Activated T-helper 2 cell treated with anti-CD3 and anti-CD28 coated beads, Interferon-gamma antibody, Interleukin-2, Interleukin-4, amounts not matched to agents 10 μg/mL and 5 μg/mL and 100 μg/mL, durations not matched to agents 14 hours and 24 hours and 36 hours (primary cell): ENCODE measurements at regions of chr7 and their contacts with region 1.

Region 1: GRCh38 chr7:80095545-80095944 is 39.1 kb upstream of the GNAI1 start:
- DNase-seq: no peak
- H3K4me3 Mint-ChIP-seq: no peak overlapping the region
- H3K27ac Mint-ChIP-seq: no peak overlapping the region
- H3K4me1 Mint-ChIP-seq: no peaks in the 10 kb centered on the region
- H3K27me3 Mint-ChIP-seq: peaks cover 11% of the 10 kb centered on the region

Region 2: GRCh38 chr7:80114159-80114558 is 18.6 kb after region 1 on chr7:
- intact Hi-C with region 1: no loop called
- DNase-seq: no peak
- H3K4me3 Mint-ChIP-seq: no peak overlapping the region
- H3K27ac Mint-ChIP-seq: no peak overlapping the region
- H3K4me1 Mint-ChIP-seq: no peaks in the 10 kb centered on the region
- H3K27me3 Mint-ChIP-seq: peaks cover 9% of the 10 kb centered on the region

Region 3: DNA sequence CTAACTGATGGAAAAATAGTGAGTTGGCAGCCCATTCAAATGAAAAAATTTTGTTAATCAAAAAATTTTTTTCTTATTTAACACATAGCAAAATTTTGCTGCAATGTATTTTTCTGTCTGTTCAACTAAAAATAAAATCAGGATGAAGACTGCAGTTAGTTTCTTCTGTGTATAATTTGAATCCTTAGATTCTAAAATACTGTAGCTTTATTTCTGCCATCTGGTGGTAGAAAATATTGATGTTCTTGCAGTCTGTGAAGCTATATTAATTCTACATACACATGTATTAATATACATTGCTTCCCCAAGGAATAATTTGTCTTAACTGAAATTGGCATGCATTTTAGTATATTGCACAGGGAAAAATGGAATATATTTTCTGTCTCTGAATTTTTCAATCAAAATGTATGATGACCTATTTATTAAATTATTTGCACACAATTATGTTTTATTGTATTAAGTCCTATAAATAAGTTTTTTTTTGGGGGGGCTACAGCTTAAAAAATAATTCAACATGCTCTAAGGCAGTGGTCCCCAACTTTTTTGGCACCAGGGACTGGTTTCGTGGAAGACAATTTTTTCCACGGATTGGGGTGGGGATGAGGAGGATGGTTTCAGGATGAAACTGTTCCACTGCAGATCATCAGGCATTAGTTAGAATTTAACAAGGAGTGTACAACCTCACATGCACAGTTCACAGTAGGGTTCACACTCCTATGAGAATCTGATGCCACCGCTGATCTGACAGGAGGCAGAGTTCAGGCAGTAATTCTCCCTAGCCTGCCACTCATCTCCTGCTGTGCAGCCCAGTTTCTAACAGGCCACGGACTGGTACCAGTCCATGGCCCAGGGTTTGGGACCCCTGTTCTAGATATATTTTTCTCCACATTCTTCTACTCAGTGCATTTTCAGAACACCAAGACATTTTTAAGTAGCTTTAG is 297.0 kb after region 1 on chr7:
- intact Hi-C with region 1: loop called (anchors 1 kb)
- DNase-seq: no peak
- H3K4me3 Mint-ChIP-seq: no peak overlapping the region
- H3K27ac Mint-ChIP-seq: no peak overlapping the region
- H3K4me1 Mint-ChIP-seq: no peaks in the 10 kb centered on the region
- H3K27me3 Mint-ChIP-seq: no peaks in the 10 kb centered on the region

Region 4: DNA sequence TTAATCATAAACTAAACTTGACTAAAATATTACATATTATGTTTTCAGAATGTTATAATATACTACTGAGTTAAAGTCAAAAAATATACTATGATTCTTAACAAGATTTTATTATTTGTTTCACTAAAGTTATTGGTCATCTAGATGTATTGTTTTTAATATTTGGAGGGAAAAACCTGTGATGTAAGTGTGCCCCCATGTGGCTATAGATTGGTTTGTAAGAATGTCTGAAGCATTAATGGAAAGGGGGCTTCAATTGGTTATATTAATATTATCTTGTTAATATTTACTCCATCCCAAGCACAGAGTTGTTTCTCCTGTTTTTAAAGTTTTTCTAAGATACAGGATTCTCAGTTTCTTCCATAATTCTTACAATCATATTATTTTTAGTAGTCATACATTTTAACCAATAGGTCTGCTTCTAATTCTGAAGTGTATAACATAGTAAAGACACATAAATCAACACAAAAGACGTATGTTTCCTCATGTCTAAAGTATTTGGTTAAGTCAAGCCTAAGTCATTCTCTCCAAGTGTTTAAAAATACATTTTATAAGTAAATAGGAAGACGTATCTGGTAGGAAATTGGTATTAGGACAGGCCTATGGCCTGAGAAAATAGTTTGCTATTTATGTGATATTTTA is 358.3 kb after region 1 on chr7:
- intact Hi-C with region 1: loop called (anchors 10 kb)
- DNase-seq: no peak
- H3K4me3 Mint-ChIP-seq: no peak overlapping the region
- H3K27ac Mint-ChIP-seq: no peak overlapping the region
- H3K4me1 Mint-ChIP-seq: no peaks in the 10 kb centered on the region
- H3K27me3 Mint-ChIP-seq: no peaks in the 10 kb centered on the region